IMR-90 (cell line): ENCODE measurements at regions of chr14 and their contacts with region 1.

Region 1: DNA sequence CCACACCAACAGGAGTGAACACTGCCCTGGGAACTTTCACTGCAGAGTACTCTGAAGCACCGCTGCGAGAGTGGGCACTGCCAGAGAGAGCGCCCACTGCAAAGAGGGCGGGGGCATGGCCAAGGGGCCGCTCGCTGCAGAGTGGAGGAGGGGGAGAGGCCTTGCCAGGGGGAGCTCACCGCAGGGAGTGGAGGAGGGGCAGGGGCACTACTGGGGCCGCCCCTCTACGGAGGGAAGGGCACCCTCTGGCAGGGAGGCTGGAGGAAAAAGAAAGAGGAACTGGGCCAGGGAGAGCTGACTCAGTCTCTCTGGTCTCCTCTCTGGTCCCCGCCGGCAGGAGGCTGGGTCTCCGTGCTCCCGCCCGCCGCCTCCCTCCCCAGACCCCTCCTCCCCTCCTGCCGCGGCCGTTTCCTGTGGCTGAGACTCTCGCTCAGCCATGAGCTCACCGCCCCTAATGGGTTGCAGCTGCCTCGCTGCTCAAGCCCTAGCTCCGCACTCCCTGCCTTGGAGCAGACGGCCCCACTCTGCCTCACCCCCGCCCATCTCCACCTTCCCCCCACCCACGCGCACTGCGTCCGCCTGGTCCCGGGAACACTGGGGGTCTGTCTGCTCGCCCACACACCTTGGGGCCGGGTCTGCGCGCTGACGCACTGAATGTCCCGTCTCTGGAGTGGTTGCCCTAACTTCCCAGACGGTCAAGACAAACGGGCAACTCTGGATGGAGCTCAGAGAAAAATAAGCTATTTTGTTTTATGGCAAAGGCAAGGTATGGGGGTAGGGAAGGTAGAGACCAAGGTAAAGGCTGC is 1.3 kb downstream of the ARHGEF40 start:
- DNase-seq: peak; percentile 95
- ATAC-seq: peak; percentile 73
- H3K4me3 ChIP-seq: peak overlapping the region; percentile 68
- H3K27ac ChIP-seq: peak overlapping the region; percentile 96
- H3K4me1 ChIP-seq: peaks cover 22% of the 10 kb centered on the region
- H3K27me3 ChIP-seq: no peaks in the 10 kb centered on the region
- CTCF ChIP-seq: no peak
- POLR2A ChIP-seq: peak; percentile 69; the same call in 1 of the 2 replicates
- RAD21 ChIP-seq: no peak

Region 2: DNA sequence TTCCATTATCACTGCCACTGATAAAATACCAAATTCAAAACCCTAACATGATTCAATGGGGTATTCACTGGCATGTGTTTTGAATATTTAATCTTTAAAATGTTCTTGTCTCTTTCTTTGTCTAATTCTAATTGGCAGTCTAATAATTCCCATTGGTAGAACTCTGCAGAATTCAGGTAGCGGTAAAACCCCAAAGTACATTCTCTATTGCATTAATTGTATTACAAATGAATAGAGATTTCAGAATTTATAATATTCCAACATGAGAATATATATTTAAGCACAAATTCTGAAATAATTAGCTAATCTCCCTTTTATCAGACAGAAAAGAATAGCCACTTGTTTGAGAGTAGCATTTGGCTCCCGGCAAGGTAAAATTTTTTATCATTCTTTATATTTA is 932.9 kb before region 1 on chr14 and contains the start of gene OR4N5:
- CTCF ChIA-PET with region 1: no interaction called
- POLR2A ChIA-PET with region 1: no interaction called
- dilution Hi-C with region 1: no loop called
- in situ Hi-C with region 1: no loop called
- intact Hi-C with region 1: no loop called
- DNase-seq: no peak
- ATAC-seq: no peak
- H3K4me3 ChIP-seq: no peak within 1 kb of the TSS
- H3K27ac ChIP-seq: no peak within 1 kb of the TSS
- H3K4me1 ChIP-seq: no peaks in the 10 kb centered on the region
- H3K27me3 ChIP-seq: no peaks in the 10 kb centered on the region
- CTCF ChIP-seq: no peak
- POLR2A ChIP-seq: no peak
- RAD21 ChIP-seq: no peak
- total RNA-seq, gene OR4N5: not detected in 2 replicates

Region 3: DNA sequence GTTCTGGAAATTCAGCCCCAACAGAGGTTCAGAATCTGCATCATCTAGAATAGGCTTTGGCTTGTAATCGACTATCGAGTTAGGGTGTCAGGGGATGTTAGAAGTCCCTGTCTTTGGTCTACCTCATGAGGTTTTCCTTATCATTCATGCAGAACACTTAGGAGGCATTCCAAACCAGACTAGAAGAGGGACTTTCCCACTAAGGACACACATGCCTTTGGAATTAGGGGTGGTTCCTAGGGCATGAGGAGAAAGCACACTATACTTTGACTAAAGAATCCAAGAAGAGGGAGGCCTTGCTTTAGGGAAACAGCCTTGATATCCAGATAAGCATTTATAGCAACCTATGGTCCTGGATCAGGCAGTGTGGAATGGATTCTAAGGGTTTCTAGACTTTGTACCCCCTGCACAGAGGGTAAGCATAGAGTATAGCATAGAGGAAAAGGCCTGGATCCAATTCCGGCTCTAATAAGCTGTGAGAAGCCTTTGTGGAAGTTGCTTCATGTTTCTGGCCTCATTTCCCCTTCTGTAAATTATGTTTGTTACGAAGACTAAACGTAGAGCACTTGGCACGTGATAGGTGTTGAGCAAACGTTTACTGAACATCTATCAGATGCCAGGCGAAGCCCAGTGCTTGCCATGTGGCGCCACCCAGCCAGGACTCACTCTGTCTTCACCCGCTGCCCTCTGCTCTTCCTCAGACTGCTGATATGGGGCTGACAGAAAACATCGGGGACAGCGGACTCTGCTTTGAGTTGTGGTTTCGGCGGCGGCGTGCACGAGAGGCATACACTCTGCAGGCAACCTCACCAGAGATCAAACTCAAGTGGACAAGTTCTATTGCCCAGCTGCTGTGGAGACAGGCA is 13.8 kb after region 1 on chr14:
- CTCF ChIA-PET with region 1: interaction called, 10 read pairs
- POLR2A ChIA-PET with region 1: interaction called, 5 read pairs
- dilution Hi-C with region 1: no loop called
- in situ Hi-C with region 1: no loop called
- intact Hi-C with region 1: loop called (anchors 1 kb)
- DNase-seq: peak; percentile 91
- ATAC-seq: peak; percentile 50
- H3K4me3 ChIP-seq: no peak overlapping the region
- H3K27ac ChIP-seq: peak overlapping the region; percentile 8; the same call in 1 of the 2 replicates
- H3K4me1 ChIP-seq: peaks cover 26% of the 10 kb centered on the region
- H3K27me3 ChIP-seq: no peaks in the 10 kb centered on the region
- CTCF ChIP-seq: no peak
- POLR2A ChIP-seq: no peak
- RAD21 ChIP-seq: no peak

Region 4: GRCh38 chr14:21092273-21093011 is 21.0 kb after region 1 on chr14:
- CTCF ChIA-PET with region 1: interaction called, 15 read pairs
- POLR2A ChIA-PET with region 1: interaction called, 5 read pairs
- dilution Hi-C with region 1: no loop called
- in situ Hi-C with region 1: no loop called
- intact Hi-C with region 1: loop called (anchors 1 kb)
- DNase-seq: peak; percentile 67
- ATAC-seq: peak; percentile 85
- H3K4me3 ChIP-seq: no peak overlapping the region
- H3K27ac ChIP-seq: no peak overlapping the region
- H3K4me1 ChIP-seq: peaks cover 5% of the 10 kb centered on the region
- H3K27me3 ChIP-seq: no peaks in the 10 kb centered on the region
- CTCF ChIP-seq: peak; percentile 100; the same call in 1 of the 2 replicates
- POLR2A ChIP-seq: peak; percentile 65; the same call in 1 of the 2 replicates
- RAD21 ChIP-seq: peak; percentile 100

Region 5: DNA sequence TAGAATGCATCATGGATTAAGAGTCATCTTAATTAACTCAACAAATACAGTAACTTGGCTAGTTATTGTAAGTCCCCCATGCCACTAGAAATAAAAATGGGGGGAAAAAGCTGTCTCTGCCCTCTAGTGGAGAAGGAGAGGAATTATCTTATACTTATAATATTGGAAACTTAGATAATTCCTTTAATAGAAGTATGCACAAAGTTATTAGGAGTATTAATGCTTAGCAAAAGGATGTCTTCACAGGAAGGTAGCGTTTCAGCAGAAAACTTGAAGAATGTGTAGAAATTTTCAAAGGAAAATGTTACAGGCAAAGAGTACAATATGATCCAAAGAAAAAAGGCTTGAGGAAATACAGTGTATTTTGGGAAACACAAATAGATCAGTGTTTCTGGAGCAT is 64.6 kb after region 1 on chr14:
- CTCF ChIA-PET with region 1: no interaction called
- POLR2A ChIA-PET with region 1: interaction called, 5 read pairs
- dilution Hi-C with region 1: no loop called
- in situ Hi-C with region 1: no loop called
- intact Hi-C with region 1: loop called (anchors 2 kb)
- DNase-seq: peak; percentile 12
- ATAC-seq: no peak; the same call in 1 of the 2 replicates
- H3K4me3 ChIP-seq: no peak overlapping the region
- H3K27ac ChIP-seq: no peak overlapping the region
- H3K4me1 ChIP-seq: no peaks in the 10 kb centered on the region
- H3K27me3 ChIP-seq: no peaks in the 10 kb centered on the region; the same call in 1 of the 2 replicates
- CTCF ChIP-seq: peak; percentile 58
- POLR2A ChIP-seq: no peak
- RAD21 ChIP-seq: peak; percentile 21; the same call in 1 of the 2 replicates

Region 6: GRCh38 chr14:21334202-21334899 is 262.9 kb after region 1 on chr14:
- CTCF ChIA-PET with region 1: no interaction called
- POLR2A ChIA-PET with region 1: no interaction called
- dilution Hi-C with region 1: no loop called
- in situ Hi-C with region 1: no loop called
- intact Hi-C with region 1: no loop called
- DNase-seq: no peak
- ATAC-seq: no peak
- H3K4me3 ChIP-seq: no peak overlapping the region
- H3K27ac ChIP-seq: no peak overlapping the region
- H3K4me1 ChIP-seq: no peaks in the 10 kb centered on the region
- H3K27me3 ChIP-seq: peaks cover 13% of the 10 kb centered on the region
- CTCF ChIP-seq: no peak
- POLR2A ChIP-seq: no peak
- RAD21 ChIP-seq: no peak